Activated B cell treated with CpG ODN at 0.5 μM for 24 hours (primary cell): ENCODE measurements at regions of chr7 and their contacts with region 1.

Region 1: DNA sequence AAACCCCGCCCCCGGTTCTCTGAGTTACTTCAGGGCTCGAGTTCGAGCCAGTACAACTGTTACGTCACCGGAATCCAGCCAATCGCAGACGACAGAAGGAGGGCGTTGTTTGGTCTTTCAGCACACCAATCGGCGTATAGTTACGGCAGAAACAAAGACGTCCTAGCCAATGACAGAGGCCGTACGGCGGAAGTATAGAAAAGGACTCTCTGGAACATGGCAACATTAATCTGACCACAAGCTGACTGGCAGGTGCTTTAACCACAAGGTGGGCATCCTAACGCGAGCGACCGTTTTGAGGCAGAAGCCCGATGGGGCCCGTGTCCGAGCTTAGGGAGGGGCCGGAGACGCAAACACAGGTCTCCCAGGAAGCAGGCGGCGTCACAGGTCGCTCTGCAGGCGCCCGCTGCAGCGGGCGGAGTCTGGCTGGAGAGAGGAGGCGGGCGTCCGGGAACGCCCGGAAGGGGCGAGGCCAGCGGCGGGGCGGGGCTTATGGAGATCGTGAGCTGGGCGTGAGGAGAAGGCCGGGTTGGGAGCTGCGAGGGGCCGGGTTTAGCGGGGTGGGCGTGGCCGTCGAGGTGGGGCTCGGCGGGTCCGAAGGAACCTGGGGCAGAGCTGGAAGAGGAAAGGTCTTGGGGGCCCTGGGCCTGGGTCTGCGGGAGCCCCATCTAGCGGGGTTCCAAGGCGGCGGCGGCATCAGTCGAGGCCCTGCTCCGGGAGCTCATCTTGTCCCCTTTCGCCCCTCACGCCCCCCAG is at the start of gene MOSPD3:
- DNase-seq: peak; percentile 99
- ATAC-seq: peak; percentile 91
- H3K4me3 Mint-ChIP-seq: peak within 1 kb of the TSS; percentile 99
- H3K27ac Mint-ChIP-seq: peak within 1 kb of the TSS; percentile 100
- H3K4me1 Mint-ChIP-seq: peaks cover 19% of the 10 kb centered on the region
- H3K27me3 Mint-ChIP-seq: no peaks in the 10 kb centered on the region
- CTCF ChIP-seq: no peak
- total RNA-seq, gene MOSPD3: 10.5 and 11.9 TPM in 2 replicates

Region 2: DNA sequence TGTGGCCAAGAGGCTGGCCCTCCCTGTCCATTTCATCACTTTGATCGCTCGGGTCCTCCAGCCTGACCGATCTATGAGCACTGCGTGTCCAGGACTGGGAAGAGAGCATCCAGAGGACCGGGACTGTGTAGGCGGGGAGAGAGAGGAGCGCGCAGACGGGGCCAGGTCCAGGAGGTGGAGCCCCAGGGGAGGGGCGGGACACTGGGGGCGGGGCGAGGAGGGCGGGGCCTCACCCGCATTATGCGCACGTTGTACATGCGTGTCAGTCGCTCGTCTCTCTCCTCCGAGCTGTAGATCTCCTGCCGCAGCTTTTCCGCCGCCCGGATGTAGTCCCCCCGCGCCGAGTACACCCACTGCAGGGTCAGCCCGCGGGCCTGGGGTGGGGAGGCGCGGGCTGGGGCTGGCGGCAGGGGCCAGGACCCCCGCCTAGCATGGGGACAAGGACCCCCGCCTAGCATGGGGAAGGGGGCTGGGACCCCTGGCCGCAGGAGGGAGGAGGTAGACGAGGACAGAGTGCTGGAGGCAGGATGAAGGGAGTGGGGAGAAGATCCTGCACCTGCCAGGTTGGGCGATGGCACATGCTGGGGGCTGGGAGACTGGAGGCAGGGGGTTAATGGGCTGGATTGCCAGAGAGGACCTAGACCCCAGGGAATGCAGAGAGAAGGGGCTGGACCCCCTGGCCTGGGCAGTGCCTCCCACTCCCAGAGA is 14.5 kb after region 1 on chr7:
- CTCF ChIA-PET with region 1: interaction called, 4 read pairs
- POLR2A ChIA-PET with region 1: interaction called, 23 read pairs
- intact Hi-C with region 1: loop called (anchors 1 kb)
- DNase-seq: peak; percentile 58
- ATAC-seq: peak; percentile 100
- H3K4me3 Mint-ChIP-seq: peak overlapping the region; percentile 67
- H3K27ac Mint-ChIP-seq: no peak overlapping the region
- H3K4me1 Mint-ChIP-seq: peaks cover 10% of the 10 kb centered on the region
- H3K27me3 Mint-ChIP-seq: no peaks in the 10 kb centered on the region
- CTCF ChIP-seq: no peak

Region 3: GRCh38 chr7:100632951-100633717 is 21.0 kb after region 1 on chr7:
- CTCF ChIA-PET with region 1: interaction called, 6 read pairs
- POLR2A ChIA-PET with region 1: interaction called, 47 read pairs
- intact Hi-C with region 1: no loop called
- DNase-seq: peak; percentile 63
- ATAC-seq: peak; percentile 71
- H3K4me3 Mint-ChIP-seq: peak overlapping the region; percentile 89
- H3K27ac Mint-ChIP-seq: peak overlapping the region; percentile 78
- H3K4me1 Mint-ChIP-seq: peaks cover 4% of the 10 kb centered on the region
- H3K27me3 Mint-ChIP-seq: no peaks in the 10 kb centered on the region
- CTCF ChIP-seq: no peak